BJ (cell line): ENCODE measurements at regions of chr7 and their contacts with region 1.

Region 1: GRCh38 chr7:85554236-85555178 is 367.7 kb upstream of the SEMA3D start:
- DNase-seq: peak; percentile 31
- H3K4me3 ChIP-seq: no peak overlapping the region
- H3K27me3 ChIP-seq: no peaks in the 10 kb centered on the region
- CTCF ChIP-seq: peak; percentile 65

Region 2: DNA sequence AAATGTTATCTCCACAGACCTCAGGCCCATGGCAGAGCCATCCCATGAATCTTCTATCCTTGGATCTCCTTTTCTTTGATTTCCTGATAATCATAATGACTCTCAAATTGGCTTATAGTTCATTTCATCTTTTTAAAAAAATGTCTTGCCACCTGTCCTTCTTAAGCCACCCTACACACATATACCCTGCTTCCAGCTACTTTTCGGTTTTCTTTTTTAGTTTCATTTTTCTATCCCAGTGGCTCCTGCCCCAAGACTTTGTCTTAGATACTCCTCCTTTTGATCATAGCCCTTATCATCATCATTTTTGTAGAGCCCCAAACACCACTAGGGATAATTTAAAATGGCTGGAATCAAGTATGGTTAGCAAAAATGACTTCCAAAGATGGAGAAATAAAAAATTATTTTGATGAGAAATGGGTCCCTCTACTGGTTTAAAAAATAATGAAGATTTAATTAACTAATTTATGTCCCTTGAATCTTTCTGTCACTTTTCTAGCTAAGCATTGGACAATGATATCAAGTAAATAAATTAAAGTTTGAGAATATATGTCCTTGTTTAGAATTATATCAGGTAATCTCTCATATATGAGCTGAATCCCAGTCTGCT is 90.4 kb before region 1 on chr7:
- CTCF ChIA-PET with region 1: interaction called, 19 read pairs
- POLR2A ChIA-PET with region 1: no interaction called
- DNase-seq: no peak
- H3K4me3 ChIP-seq: no peak overlapping the region
- H3K27me3 ChIP-seq: no peaks in the 10 kb centered on the region
- CTCF ChIP-seq: no peak; the same call in 1 of the 2 replicates

Region 3: DNA sequence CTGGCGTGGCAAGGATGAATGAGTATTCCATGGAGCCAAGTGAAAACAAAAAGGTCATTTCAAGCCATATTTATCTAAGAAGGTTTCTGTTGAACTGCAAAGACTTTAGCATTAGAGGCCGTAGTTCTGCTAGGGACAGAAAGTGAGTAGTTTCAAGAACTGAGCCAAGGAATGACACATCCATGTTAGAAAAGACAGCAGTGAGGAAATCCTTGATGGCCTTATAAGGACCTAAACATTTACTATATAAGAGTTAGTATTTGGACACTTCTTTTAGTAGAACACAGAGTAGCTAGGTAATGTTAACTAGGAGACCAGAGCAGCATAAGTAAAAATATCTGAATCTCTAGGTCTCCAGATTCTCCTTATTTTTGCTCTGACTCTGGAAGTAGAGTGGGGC is 37.8 kb before region 1 on chr7:
- CTCF ChIA-PET with region 1: no interaction called
- POLR2A ChIA-PET with region 1: no interaction called
- DNase-seq: no peak
- H3K4me3 ChIP-seq: no peak overlapping the region
- H3K27me3 ChIP-seq: no peaks in the 10 kb centered on the region
- CTCF ChIP-seq: no peak